Heart left ventricle (tissue), 16 donors: ENCODE measurements at regions of chr12 and their contacts with region 1.

Region 1: DNA sequence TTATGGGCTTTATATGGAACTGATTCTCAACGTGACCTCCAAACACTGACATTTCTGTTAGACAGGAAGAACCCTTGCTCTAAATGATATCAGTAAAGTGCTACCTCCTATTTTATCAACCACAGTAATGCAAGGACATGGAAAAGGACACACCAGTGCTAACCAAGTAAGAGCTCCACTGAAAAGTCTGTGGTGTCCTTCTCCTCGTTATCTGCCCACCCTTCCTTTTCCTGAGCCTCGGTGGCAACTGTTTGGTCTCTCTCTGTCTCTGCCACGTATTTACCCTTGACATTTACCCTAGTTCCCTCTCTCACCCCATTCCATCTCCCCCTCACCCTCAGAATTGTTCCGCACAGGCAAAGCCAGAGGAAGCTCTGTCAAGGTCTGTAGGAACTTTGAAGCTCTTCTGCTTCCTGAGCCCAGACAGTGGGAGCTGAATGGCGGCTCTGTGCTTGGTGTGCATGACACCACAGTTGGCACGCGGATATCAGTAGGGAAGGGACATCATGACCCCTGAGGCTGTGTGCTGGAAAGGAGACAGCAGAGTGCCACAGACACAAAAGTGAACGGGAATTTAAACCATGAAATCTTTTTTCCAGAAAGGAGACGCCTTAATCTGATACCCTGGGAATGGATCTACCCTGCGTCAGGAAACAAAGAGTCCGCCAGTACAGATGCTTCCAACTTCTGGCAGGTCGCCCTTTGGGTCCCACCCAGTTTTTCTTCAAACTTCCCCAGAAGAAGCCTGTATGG is 50.8 kb downstream of the NTN4 start:
- DNase-seq: peak; percentile 61 to 87 (median 70)
- ATAC-seq: peak; percentile 84 to 92 (median 88)
- H3K4me3 ChIP-seq: peak overlapping the region in 4 of 12 donors; percentile 3 to 23 (median 4)
- H3K27ac ChIP-seq: peak overlapping the region; percentile 78 to 95 (median 86)
- H3K4me1 ChIP-seq: peaks cover 0 to 64% (median 38%) of the 10 kb centered on the region in 12 donors
- H3K27me3 ChIP-seq: no peaks in the 10 kb centered on the region
- CTCF ChIP-seq: no peak
- POLR2A ChIP-seq: no peak

Region 2: DNA sequence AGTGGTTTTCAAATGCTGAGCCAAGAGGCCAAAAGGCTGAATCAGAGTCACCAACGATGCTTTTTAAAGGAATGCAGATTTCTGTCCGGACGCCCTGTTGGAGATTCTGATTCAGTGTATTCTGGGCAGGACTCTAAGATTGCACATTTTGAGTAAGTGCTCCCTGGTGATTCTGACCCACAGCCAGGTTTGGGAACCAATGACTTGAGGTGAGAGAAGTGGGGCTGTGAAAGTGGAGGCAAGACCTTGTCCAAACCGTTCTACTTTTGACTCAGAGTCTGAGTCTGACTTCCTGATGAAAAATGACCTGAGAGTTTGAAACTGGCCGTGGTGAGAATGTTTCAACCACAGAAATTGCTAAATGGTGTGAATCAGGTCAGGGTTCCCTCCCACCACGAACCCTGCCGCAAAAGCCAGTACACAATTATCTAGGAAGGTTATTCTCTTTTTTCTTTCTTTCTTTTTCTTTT is 39.4 kb before region 1 on chr12:
- intact Hi-C with region 1: loop called in 3 of 10 experiments (anchors 5 kb)
- DNase-seq: no peak
- ATAC-seq: peak in 1 of 4 donors; percentile 4
- H3K4me3 ChIP-seq: no peak overlapping the region
- H3K27ac ChIP-seq: peak overlapping the region in 8 of 12 donors; percentile 4 to 76 (median 64)
- H3K4me1 ChIP-seq: peaks cover 0 to 48% (median 11%) of the 10 kb centered on the region in 12 donors
- H3K27me3 ChIP-seq: no peaks in the 10 kb centered on the region
- CTCF ChIP-seq: no peak
- POLR2A ChIP-seq: no peak

Region 3: DNA sequence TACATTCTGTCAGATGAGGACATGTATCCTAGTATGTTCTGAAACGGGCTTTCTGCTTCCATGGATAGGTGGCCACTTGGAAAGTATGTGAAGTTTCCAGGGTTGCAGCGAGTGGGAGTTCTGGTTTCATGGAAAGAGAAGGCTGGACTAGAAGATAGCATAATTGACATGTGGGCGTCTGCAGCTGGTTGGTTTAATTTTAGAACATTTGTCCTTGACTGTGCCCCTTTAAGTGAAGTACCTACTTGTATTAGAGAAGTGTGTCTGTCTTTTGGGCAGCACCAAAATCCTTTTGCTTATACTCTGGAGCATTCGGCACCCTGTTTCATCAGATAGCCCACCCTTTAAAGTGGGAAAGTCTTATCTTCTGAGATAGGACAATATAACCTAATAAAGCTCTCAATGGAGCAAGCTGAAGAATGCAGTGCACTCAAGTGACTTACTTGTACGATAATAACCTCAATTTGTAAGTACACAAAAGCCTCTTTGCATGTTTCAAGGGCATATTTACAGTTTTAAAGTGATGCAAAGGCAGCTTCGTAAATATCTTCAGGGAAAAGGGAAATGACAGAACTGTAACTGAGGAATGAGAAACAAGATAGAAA is 15.6 kb after region 1 on chr12:
- intact Hi-C with region 1: loop called in 1 of 10 experiments (anchors 1 kb)
- DNase-seq: peak in 4 of 5 donors; percentile 39 to 47 (median 42)
- ATAC-seq: peak; percentile 89 to 98 (median 96)
- H3K4me3 ChIP-seq: peak overlapping the region in 10 of 12 donors; percentile 12 to 48 (median 32)
- H3K27ac ChIP-seq: peak overlapping the region; percentile 47 to 82 (median 68)
- H3K4me1 ChIP-seq: peaks cover 0 to 29% (median 15%) of the 10 kb centered on the region in 12 donors
- H3K27me3 ChIP-seq: no peaks in the 10 kb centered on the region
- CTCF ChIP-seq: peak in 1 of 12 donors; percentile 14
- POLR2A ChIP-seq: no peak

Region 4: GRCh38 chr12:96015672-96016071 is 275.9 kb after region 1 on chr12:
- intact Hi-C with region 1: no loop called
- DNase-seq: peak in 1 of 5 donors; percentile 44
- ATAC-seq: peak; percentile 50 to 73 (median 70)
- H3K4me3 ChIP-seq: no peak overlapping the region
- H3K27ac ChIP-seq: no peak overlapping the region
- H3K4me1 ChIP-seq: peaks cover 0 to 16% (median 3%) of the 10 kb centered on the region in 12 donors
- H3K27me3 ChIP-seq: no peaks in the 10 kb centered on the region
- CTCF ChIP-seq: peak; percentile 22 to 59 (median 40)
- POLR2A ChIP-seq: no peak

Region 5: DNA sequence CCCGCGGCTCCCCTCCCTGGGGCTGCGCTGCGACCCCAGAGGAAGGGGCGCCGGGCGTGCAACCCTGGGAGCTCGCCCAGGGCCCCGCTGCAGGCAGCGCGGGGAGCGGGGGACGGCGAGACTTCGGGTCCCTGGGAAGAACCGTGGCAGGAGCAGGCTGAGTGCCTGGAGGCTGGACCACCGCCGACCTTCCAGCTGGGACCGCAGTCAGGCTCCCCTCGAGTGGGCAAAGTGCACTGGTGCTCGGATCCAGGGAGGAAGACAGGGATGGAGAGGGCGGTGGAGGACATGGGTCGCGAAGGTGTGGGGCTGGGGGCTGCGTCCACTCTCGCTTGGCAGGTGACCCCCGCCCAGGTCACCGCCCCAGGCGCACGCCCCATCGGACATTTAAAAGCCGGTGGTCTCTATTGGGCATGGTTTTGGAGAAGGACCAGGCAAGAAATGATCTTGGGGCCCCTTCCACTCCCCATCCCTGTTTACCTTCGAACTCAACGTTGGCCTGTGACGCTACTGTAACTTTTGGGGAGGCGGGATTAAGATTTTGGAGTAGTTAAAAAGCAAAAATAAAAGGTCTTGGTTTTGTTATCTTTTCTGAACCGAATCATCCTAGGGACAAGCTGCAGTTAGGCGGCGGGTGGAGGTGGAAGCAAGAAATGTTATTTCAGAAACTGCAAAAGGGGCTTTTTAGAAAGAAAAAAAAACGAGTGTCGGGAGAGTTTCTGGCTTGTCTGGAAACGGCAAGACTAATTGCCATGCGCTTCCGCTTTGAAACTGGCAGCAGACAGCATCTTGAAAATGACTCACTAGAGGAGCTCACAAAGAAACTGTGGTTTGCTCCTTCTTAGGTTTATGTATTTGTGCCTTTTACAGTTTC is 455.5 kb after region 1 on chr12:
- intact Hi-C with region 1: no loop called
- DNase-seq: peak; percentile 32 to 67 (median 46)
- ATAC-seq: peak in 2 of 4 donors; percentile 52 to 56
- H3K4me3 ChIP-seq: peak overlapping the region; percentile 58 to 98 (median 78)
- H3K27ac ChIP-seq: peak overlapping the region; percentile 74 to 95 (median 88)
- H3K4me1 ChIP-seq: peaks cover 3 to 58% (median 15%) of the 10 kb centered on the region in 12 donors
- H3K27me3 ChIP-seq: no peaks in the 10 kb centered on the region
- CTCF ChIP-seq: no peak
- POLR2A ChIP-seq: no peak